A673 (cell line): ENCODE measurements at regions of chr12 and their contacts with region 1.

Region 1: GRCh38 chr12:120649442-120650232 is 9.2 kb downstream of the CABP1 start:
- DNase-seq: peak; percentile 34
- H3K4me3 ChIP-seq: peak overlapping the region; percentile 44
- H3K27ac ChIP-seq: no peak overlapping the region
- H3K4me1 ChIP-seq: peaks cover 24% of the 10 kb centered on the region
- H3K27me3 ChIP-seq: peaks cover under 1% of the 10 kb centered on the region
- CTCF ChIP-seq: no peak; the same call in 1 of the 2 replicates

Region 2: GRCh38 chr12:120327593-120327992 is 322.0 kb before region 1 on chr12 and contains the start of gene PLA2G1B:
- CTCF ChIA-PET with region 1: no interaction called
- POLR2A ChIA-PET with region 1: no interaction called
- intact Hi-C with region 1: no loop called
- DNase-seq: no peak
- H3K4me3 ChIP-seq: no peak within 1 kb of the TSS
- H3K27ac ChIP-seq: no peak within 1 kb of the TSS
- H3K4me1 ChIP-seq: no peaks in the 10 kb centered on the region
- H3K27me3 ChIP-seq: no peaks in the 10 kb centered on the region
- CTCF ChIP-seq: no peak
- total RNA-seq, gene PLA2G1B: not detected in 2 replicates

Region 3: GRCh38 chr12:120580787-120581723 is 68.6 kb before region 1 on chr12 and contains the start of gene POP5:
- CTCF ChIA-PET with region 1: interaction called, 9 read pairs
- POLR2A ChIA-PET with region 1: no interaction called
- intact Hi-C with region 1: loop called (anchors 5 kb)
- DNase-seq: peak; percentile 99
- H3K4me3 ChIP-seq: peak within 1 kb of the TSS; percentile 89
- H3K27ac ChIP-seq: peak within 1 kb of the TSS; percentile 59
- H3K4me1 ChIP-seq: peaks cover 10% of the 10 kb centered on the region
- H3K27me3 ChIP-seq: no peaks in the 10 kb centered on the region
- CTCF ChIP-seq: no peak
- total RNA-seq, gene POP5: 41.0 and 42.4 TPM in 2 replicates

Region 4: GRCh38 chr12:120662879-120663278 is 13.2 kb after region 1 on chr12:
- CTCF ChIA-PET with region 1: interaction called, 11 read pairs
- POLR2A ChIA-PET with region 1: interaction called, 14 read pairs
- intact Hi-C with region 1: no loop called
- DNase-seq: no peak
- H3K4me3 ChIP-seq: no peak overlapping the region
- H3K27ac ChIP-seq: no peak overlapping the region
- H3K4me1 ChIP-seq: no peaks in the 10 kb centered on the region
- H3K27me3 ChIP-seq: no peaks in the 10 kb centered on the region
- CTCF ChIP-seq: no peak

Region 5: GRCh38 chr12:120761519-120761934 is 111.9 kb after region 1 on chr12:
- CTCF ChIA-PET with region 1: no interaction called
- POLR2A ChIA-PET with region 1: no interaction called
- intact Hi-C with region 1: no loop called
- DNase-seq: no peak
- H3K4me3 ChIP-seq: no peak overlapping the region
- H3K27ac ChIP-seq: peak overlapping the region; percentile 38
- H3K4me1 ChIP-seq: peaks cover 8% of the 10 kb centered on the region
- H3K27me3 ChIP-seq: no peaks in the 10 kb centered on the region
- CTCF ChIP-seq: no peak

Region 6: DNA sequence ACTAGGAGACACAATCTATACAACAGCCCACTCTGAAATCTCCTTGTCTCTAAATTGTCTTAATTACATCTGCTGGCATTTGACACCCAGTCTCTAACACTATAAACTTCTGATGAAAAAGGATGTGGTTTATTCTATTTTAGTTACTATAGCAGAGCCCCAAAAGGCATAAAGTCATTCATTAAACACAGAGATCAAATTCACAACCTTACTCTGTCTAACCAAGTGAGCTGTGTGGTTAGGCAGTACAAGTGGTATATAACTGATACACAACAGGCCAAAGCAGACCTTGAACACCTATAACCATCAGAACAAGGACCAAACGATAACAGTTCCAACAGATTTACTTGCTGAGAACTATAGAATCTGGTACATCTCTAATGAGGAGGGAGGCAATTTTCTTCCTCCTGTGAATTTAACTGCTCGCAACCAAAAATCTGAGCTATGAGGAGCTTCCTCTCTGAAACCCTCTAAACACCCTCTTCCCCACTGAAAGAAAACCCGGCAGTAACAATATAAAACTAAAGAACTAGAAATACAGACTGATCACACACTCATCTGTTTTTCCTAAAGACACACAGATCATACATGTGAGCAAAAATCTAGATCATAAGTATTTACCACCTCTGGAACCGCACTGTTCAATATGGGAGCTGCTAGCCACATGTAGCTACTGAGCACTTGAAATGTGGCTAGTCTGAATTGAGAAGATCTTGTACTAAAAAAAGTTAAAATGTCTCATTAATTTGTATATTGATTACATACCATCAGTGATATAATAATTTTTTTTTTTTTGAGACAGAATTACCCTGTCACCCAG is 236.8 kb after region 1 on chr12:
- CTCF ChIA-PET with region 1: no interaction called
- POLR2A ChIA-PET with region 1: no interaction called
- intact Hi-C with region 1: no loop called
- DNase-seq: no peak
- H3K4me3 ChIP-seq: no peak overlapping the region
- H3K27ac ChIP-seq: no peak overlapping the region
- H3K4me1 ChIP-seq: no peaks in the 10 kb centered on the region
- H3K27me3 ChIP-seq: no peaks in the 10 kb centered on the region
- CTCF ChIP-seq: no peak

Region 7: DNA sequence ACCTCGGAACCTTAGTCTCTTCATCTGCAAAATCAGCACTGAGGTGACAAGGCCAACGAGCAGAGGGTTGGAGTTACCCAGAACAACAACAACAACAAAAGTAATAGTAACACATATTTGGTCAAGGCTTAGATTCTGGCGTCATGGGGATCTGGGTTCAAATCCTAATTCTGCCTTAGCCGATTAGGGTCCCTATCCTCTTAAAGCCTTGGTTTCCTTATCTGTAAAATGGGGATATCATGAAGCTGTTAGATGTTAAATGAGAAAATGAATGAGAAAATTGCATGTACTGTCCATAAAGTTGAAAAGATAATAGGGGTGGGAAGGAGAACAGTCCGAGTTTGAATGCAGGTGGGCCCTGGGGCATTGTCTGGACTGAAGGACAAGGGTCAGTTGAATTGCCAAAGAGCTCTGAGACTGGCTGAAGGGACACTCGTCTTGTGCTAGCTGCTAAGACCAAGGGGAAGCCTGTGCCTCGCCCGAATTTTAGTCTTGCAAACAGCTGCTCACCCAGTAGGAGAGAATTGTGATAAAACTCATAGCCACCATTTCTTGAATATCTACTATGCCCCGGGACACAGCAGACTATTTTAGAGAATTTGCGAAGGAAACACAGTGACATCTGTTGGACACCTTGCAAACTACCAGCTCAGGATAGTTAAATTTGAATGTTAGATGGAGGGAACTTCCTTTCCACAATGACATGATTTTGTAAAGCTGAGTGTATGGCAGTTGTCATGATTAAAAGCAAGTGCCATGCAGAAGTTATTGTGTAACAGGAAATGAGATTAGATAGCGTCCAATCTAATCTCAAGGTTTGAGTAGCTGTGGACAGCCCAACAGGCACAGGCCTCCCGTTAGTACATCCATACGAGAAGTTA is 321.9 kb after region 1 on chr12:
- CTCF ChIA-PET with region 1: interaction called, 4 read pairs
- POLR2A ChIA-PET with region 1: no interaction called
- intact Hi-C with region 1: loop called (anchors 5 kb)
- DNase-seq: peak; percentile 93
- H3K4me3 ChIP-seq: no peak overlapping the region
- H3K27ac ChIP-seq: no peak overlapping the region
- H3K4me1 ChIP-seq: peaks cover 8% of the 10 kb centered on the region
- H3K27me3 ChIP-seq: no peaks in the 10 kb centered on the region
- CTCF ChIP-seq: peak; percentile 90

Region 8: GRCh38 chr12:121128970-121129810 is 479.6 kb after region 1 on chr12:
- CTCF ChIA-PET with region 1: interaction called, 13 read pairs
- POLR2A ChIA-PET with region 1: no interaction called
- intact Hi-C with region 1: no loop called
- DNase-seq: peak; percentile 79
- H3K4me3 ChIP-seq: no peak overlapping the region
- H3K27ac ChIP-seq: no peak overlapping the region
- H3K4me1 ChIP-seq: no peaks in the 10 kb centered on the region
- H3K27me3 ChIP-seq: no peaks in the 10 kb centered on the region
- CTCF ChIP-seq: no peak